ENCODE measurements at regions of chr20 and their contacts with region 1.

Region 1: DNA sequence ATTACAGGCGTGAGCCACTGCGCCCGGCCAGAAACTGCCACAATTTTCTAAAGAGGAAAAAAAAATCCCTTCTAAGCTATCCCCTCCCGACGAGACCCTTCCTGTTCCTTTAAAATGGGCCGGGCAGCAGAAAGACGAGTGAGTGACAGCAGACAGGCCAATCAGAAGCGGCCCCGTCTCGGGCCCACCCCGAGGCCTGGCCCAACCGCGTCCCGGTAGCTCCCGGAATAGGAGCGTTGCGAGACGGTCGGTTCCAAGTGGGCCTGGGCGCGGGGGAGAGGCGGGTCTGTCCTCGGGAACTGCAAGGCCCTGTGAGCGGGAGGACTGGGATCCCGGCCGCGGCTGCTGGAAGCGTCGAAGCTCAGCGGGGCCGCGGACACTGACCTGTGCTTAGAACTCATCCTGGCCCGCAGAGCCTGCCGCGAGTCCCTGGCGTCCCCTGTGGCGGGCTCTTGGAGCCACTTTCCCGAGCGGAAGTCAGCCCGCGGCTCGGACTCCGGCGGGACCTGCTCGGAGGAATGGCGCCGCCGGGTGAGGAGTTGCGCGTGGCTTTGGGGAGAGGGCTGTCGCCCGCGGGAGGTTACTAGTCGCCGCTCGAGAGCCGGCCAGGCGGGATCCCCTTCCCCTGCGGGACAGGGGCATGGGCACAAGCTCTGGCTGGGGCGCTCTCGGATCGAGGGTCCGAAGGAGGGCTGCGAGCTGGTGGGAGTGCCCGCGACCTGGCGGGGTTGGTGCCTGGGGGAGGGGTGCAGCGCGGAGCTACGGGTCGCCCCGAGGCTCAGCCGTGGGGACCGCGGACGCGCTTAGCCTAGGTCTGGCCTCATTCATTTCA is at the starts of genes MROH8 and RPN2:
- DNase-seq: peak; percentile 88 to 97 (median 94)
- ATAC-seq: peak; percentile 92
- H3K4me3 ChIP-seq: peak within 1 kb of the TSS; percentile 95 to 98
- H3K4me3 Mint-ChIP-seq: peak within 1 kb of the TSS; percentile 98
- H3K27ac ChIP-seq: peak within 1 kb of the TSS; percentile 94 to 96
- H3K27ac Mint-ChIP-seq: peak within 1 kb of the TSS; percentile 98
- H3K4me1 ChIP-seq: peaks cover 26% of the 10 kb centered on the region
- H3K4me1 Mint-ChIP-seq: peaks cover 44% of the 10 kb centered on the region
- H3K27me3 ChIP-seq: no peaks in the 10 kb centered on the region
- H3K27me3 Mint-ChIP-seq: no peaks in the 10 kb centered on the region
- CTCF ChIP-seq: no peak
- total RNA-seq, gene MROH8: 0.60 to 1.1 TPM
- total RNA-seq, gene RPN2: 60.8 to 68.8 TPM

Region 2: GRCh38 chr20:36460648-36461599 is 718.1 kb before region 1 on chr20:
- CTCF ChIA-PET with region 1: no interaction called
- POLR2A ChIA-PET with region 1: no interaction called
- intact Hi-C with region 1: loop called in 1 of 2 experiments (anchors 2 kb)
- DNase-seq: peak; percentile 78 to 97 (median 89)
- ATAC-seq: peak; percentile 83
- H3K4me3 ChIP-seq: peak overlapping the region; percentile 47 to 52
- H3K4me3 Mint-ChIP-seq: peak overlapping the region; percentile 80
- H3K27ac ChIP-seq: peak overlapping the region; percentile 69 to 90
- H3K27ac Mint-ChIP-seq: peak overlapping the region; percentile 89
- H3K4me1 ChIP-seq: peaks cover 45% of the 10 kb centered on the region
- H3K4me1 Mint-ChIP-seq: peaks cover 44% of the 10 kb centered on the region
- H3K27me3 ChIP-seq: no peaks in the 10 kb centered on the region
- H3K27me3 Mint-ChIP-seq: no peaks in the 10 kb centered on the region
- CTCF ChIP-seq: no peak

Region 3: DNA sequence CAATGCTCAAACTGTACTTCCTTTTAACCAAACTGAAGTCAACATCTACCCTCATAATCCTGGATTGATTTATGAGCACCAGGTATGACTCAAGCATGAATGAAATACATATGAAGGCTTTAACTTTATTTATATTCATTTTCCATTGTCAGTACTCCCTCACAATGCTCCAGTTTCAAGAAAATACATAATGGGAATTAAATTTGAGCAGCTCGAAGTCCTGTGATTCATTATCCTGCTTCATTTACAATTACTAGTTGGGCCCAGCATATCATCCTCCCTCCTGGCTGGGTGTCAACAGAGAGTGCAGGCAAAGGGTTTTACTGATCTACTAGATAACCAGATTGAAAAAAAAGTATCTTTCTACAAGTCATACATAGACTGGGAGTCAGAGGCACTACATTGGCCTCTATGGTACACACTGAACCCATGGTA is 237.6 kb before region 1 on chr20:
- CTCF ChIA-PET with region 1: no interaction called
- POLR2A ChIA-PET with region 1: no interaction called
- intact Hi-C with region 1: loop called in 1 of 2 experiments (anchors 10 kb)
- DNase-seq: peak in 2 of 9 experiments; percentile 27 to 35
- ATAC-seq: no peak
- H3K4me3 ChIP-seq: peak overlapping the region in 1 of 2 experiments; percentile 5
- H3K4me3 Mint-ChIP-seq: peak overlapping the region; percentile 52
- H3K27ac ChIP-seq: peak overlapping the region; percentile 13 to 67
- H3K27ac Mint-ChIP-seq: peak overlapping the region; percentile 88
- H3K4me1 ChIP-seq: peaks cover 82% of the 10 kb centered on the region
- H3K4me1 Mint-ChIP-seq: peaks cover 68% of the 10 kb centered on the region
- H3K27me3 ChIP-seq: no peaks in the 10 kb centered on the region
- H3K27me3 Mint-ChIP-seq: no peaks in the 10 kb centered on the region
- CTCF ChIP-seq: no peak